Activated CD4-positive, alpha-beta T cell treated with anti-CD3 and anti-CD28 coated beads, Interleukin-2, amount 10 ng/mL, durations not matched to agents 24 days and 14 days (primary cell): ENCODE measurements at regions of chr10 and their contacts with region 1.

Region 1: DNA sequence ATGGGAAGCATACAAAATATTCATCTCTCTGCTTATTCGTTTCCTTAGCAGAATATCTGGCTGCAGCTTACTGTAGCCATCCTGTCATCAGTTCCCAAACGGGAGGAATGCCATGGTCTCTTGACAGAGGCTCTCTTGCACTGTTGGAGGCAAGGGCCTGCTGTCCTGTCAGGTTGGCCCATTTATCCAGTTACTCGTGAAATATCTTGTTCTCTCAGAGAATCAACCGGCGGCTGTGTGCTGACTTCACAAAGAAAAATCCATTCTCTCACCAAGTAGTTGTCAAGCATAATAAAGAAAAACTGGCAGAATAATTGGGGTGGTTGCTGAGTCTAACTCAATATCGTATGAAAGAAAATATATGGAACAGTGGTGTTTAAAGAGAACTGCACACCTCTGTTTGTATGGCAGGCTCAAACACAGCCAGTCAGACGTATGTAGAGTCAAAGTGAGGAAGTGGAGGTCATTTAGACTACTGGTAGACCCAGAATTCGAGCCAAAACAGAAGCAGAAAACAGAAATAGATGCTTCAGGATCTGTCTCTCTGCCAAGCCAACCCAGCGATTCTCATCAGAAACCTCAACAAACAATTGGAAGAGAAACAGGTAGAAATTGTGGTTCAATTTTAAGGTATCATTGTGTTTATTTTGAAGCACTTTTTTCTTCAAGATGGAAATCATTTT is 349.2 kb upstream of the PRKCQ start:
- DNase-seq: no peak
- H3K4me3 Mint-ChIP-seq: no peak overlapping the region
- H3K27ac Mint-ChIP-seq: no peak overlapping the region
- H3K4me1 Mint-ChIP-seq: peaks cover 45% of the 10 kb centered on the region
- H3K27me3 Mint-ChIP-seq: no peaks in the 10 kb centered on the region

Region 2: DNA sequence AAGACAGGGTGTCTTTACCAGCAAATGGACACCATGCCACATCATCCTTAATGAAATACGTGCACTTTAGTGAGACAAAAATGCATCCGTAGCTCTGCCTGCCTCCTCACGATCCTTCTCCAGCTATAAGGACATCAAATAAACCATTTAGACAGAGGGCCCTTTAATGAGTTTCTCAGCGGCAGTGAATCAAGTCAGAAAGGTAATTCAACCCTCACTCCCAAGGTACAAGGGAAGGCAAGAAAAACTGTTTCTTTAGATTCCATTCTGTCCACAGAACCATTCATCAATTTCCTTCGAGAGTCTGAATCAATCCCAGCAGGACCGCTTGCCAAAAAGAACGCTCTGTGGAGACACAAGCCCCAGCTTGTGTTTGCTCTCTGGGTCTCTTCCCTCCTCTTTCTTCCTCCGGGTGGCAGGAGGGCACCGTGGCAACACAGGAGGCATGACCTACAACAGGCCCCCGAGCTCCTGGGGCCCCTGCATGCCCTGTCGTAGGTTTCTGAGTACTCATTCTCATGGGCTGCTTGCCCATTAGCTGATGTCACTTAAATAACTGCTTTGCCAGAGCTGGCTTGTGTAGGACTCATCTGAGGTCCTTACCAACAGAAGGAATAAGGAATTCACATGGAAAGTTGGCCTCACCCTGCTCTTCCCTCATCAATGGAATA is 51.4 kb before region 1 on chr10:
- intact Hi-C with region 1: no loop called
- DNase-seq: no peak
- H3K4me3 Mint-ChIP-seq: no peak overlapping the region
- H3K27ac Mint-ChIP-seq: no peak overlapping the region
- H3K4me1 Mint-ChIP-seq: no peaks in the 10 kb centered on the region
- H3K27me3 Mint-ChIP-seq: peaks cover 46% of the 10 kb centered on the region

Region 3: GRCh38 chr10:7192831-7193361 is 263.6 kb after region 1 on chr10:
- intact Hi-C with region 1: loop called (anchors 5 kb)
- DNase-seq: peak; percentile 93
- H3K4me3 Mint-ChIP-seq: peak overlapping the region; percentile 80
- H3K27ac Mint-ChIP-seq: peak overlapping the region; percentile 95
- H3K4me1 Mint-ChIP-seq: peaks cover 59% of the 10 kb centered on the region
- H3K27me3 Mint-ChIP-seq: no peaks in the 10 kb centered on the region